ENCODE measurements at regions of chr7 and their contacts with region 1.

Region 1: GRCh38 chr7:135672560-135673359 is 10.4 kb downstream of the STMP1 start:
- DNase-seq: no peak
- ATAC-seq: peak; percentile 47
- H3K4me3 Mint-ChIP-seq: no peak overlapping the region
- H3K27ac Mint-ChIP-seq: no peak overlapping the region
- H3K4me1 Mint-ChIP-seq: peaks cover 20% of the 10 kb centered on the region
- H3K27me3 Mint-ChIP-seq: no peaks in the 10 kb centered on the region

Region 2: GRCh38 chr7:135710417-135711138 is 37.8 kb after region 1 on chr7:
- CTCF ChIA-PET with region 1: interaction called, 15 read pairs
- POLR2A ChIA-PET with region 1: interaction called, 3 read pairs
- intact Hi-C with region 1: loop called in 1 of 2 experiments (anchors 2 kb)
- DNase-seq: peak; percentile 30
- ATAC-seq: no peak
- H3K4me3 Mint-ChIP-seq: no peak overlapping the region
- H3K27ac Mint-ChIP-seq: no peak overlapping the region
- H3K4me1 Mint-ChIP-seq: no peaks in the 10 kb centered on the region
- H3K27me3 Mint-ChIP-seq: no peaks in the 10 kb centered on the region

Region 3: GRCh38 chr7:135795846-135796570 is 123.2 kb after region 1 on chr7:
- CTCF ChIA-PET with region 1: no interaction called
- POLR2A ChIA-PET with region 1: no interaction called
- intact Hi-C with region 1: loop called in 1 of 2 experiments (anchors 5 kb)
- DNase-seq: no peak
- ATAC-seq: no peak
- H3K4me3 Mint-ChIP-seq: no peak overlapping the region
- H3K27ac Mint-ChIP-seq: no peak overlapping the region
- H3K4me1 Mint-ChIP-seq: peaks cover 6% of the 10 kb centered on the region
- H3K27me3 Mint-ChIP-seq: peaks cover 9% of the 10 kb centered on the region

Region 4: GRCh38 chr7:136009488-136010079 is 336.8 kb after region 1 on chr7:
- CTCF ChIA-PET with region 1: no interaction called
- POLR2A ChIA-PET with region 1: no interaction called
- intact Hi-C with region 1: loop called in 1 of 2 experiments (anchors 2 kb)
- DNase-seq: no peak
- ATAC-seq: no peak
- H3K4me3 Mint-ChIP-seq: no peak overlapping the region
- H3K27ac Mint-ChIP-seq: no peak overlapping the region
- H3K4me1 Mint-ChIP-seq: peaks cover 4% of the 10 kb centered on the region
- H3K27me3 Mint-ChIP-seq: peaks cover 8% of the 10 kb centered on the region

Measured in activated CD4-positive, alpha-beta T cell treated with anti-CD3 and anti-CD28 coated beads for 36 hours (primary cell).